PC-9 (cell line): ENCODE measurements at regions of chr22 and their contacts with region 1.

Region 1: DNA sequence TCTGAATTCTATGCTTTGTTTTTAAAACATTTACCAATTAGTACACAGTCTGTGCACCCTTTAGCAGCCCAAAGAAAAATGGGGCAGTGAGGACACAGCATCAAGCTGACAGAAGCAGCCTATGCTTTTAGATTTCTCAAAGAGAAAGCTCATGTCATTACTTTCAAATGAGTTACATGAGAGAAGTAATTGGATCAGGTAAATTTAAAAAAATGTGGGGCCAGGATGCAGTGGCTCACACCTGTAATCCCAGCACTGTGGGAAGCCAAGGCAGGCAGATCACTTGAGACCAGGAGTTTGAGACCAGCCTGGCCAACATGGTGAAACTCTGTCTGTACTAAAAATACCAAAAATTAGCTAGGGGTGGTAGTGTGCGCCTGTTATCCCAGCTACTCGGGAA is 57.7 kb downstream of the APOL5 start:
- DNase-seq: no peak
- H3K4me3 ChIP-seq: no peak overlapping the region
- H3K27ac ChIP-seq: no peak overlapping the region
- H3K4me1 ChIP-seq: peaks cover 20% of the 10 kb centered on the region
- H3K27me3 ChIP-seq: no peaks in the 10 kb centered on the region
- CTCF ChIP-seq: no peak

Region 2: GRCh38 chr22:35812600-35812999 is 37.3 kb after region 1 on chr22:
- CTCF ChIA-PET with region 1: no interaction called
- POLR2A ChIA-PET with region 1: no interaction called
- intact Hi-C with region 1: no loop called
- DNase-seq: no peak
- H3K4me3 ChIP-seq: no peak overlapping the region
- H3K27ac ChIP-seq: no peak overlapping the region
- H3K4me1 ChIP-seq: no peaks in the 10 kb centered on the region
- H3K27me3 ChIP-seq: no peaks in the 10 kb centered on the region
- CTCF ChIP-seq: no peak

Region 3: GRCh38 chr22:36015811-36016529 is 240.6 kb after region 1 on chr22:
- CTCF ChIA-PET with region 1: interaction called, 12 read pairs
- POLR2A ChIA-PET with region 1: no interaction called
- intact Hi-C with region 1: no loop called
- DNase-seq: no peak
- H3K4me3 ChIP-seq: no peak overlapping the region
- H3K27ac ChIP-seq: no peak overlapping the region
- H3K4me1 ChIP-seq: peaks cover 8% of the 10 kb centered on the region; the same call in 1 of the 2 replicates
- H3K27me3 ChIP-seq: no peaks in the 10 kb centered on the region
- CTCF ChIP-seq: no peak